Naive thymus-derived CD4-positive, alpha-beta T cell (primary cell): ENCODE measurements at regions of chr10 and their contacts with region 1.

Region 1: GRCh38 chr10:114937962-114938855 is at the start of gene TRUB1:
- DNase-seq: peak; percentile 59 to 91 (median 87)
- ATAC-seq: peak; percentile 100
- H3K4me3 ChIP-seq: peak within 1 kb of the TSS; percentile 87
- H3K4me3 Mint-ChIP-seq: peak within 1 kb of the TSS; percentile 94 to 99 (median 96)
- H3K27ac ChIP-seq: peak within 1 kb of the TSS; percentile 79
- H3K27ac Mint-ChIP-seq: peak within 1 kb of the TSS; percentile 95 to 98 (median 96)
- H3K4me1 ChIP-seq: peaks cover 12 to 23% of the 10 kb centered on the region in 2 donors
- H3K4me1 Mint-ChIP-seq: peaks cover 20 to 43% (median 31%) of the 10 kb centered on the region in 7 donors
- H3K27me3 ChIP-seq: no peaks in the 10 kb centered on the region
- H3K27me3 Mint-ChIP-seq: no peaks in the 10 kb centered on the region
- total RNA-seq, gene TRUB1: 6.8 to 14.6 (median 12.9) TPM

Region 2: DNA sequence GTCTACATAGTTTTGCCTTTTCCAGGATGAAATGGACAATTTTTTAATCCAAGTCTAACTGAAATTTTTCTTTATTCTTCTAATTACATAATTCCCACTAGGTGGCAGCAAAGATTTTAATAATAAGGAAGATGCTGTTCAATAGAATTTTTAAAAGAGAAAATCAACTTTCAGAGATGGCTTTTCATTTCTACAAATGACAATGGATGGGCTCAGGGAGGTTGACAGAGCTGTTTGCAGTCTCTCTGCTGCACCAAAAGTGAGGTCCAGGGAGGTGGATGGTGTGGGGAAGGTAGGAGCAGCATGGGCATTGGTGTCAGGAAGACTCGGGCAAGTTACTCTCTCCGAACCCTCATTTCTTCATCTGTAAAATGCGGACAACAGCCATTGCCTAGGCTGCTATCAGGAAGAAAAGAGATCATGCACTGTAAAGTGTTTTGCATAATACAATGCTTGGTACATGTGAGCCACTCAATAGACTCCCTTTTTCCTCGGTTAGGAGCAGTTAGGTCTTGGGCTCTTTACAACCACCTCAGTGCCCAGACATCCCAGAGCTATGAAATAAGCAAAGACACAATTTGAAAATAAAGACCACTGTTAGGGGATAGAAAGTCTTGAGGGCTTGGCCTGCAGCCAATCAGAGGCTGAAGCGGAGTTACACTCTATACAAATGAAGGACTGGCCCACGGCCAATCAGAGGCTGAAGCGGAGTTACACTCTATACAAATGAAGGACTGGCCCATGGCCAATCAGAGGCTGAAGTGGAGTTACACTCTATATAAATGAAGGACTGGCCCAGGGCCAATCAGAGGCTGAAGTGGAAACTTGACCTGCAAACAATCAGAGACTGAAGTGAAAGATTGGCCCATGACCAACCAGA is 387.2 kb before region 1 on chr10:
- CTCF ChIA-PET with region 1: no interaction called
- POLR2A ChIA-PET with region 1: no interaction called
- intact Hi-C with region 1: no loop called
- DNase-seq: peak in 5 of 9 donors; percentile 33 to 50 (median 40)
- ATAC-seq: peak; percentile 26
- H3K4me3 ChIP-seq: no peak overlapping the region
- H3K4me3 Mint-ChIP-seq: no peak overlapping the region
- H3K27ac ChIP-seq: no peak overlapping the region
- H3K27ac Mint-ChIP-seq: peak overlapping the region in 5 of 9 donors; percentile 1 to 61 (median 20)
- H3K4me1 ChIP-seq: peaks cover 6 to 29% of the 10 kb centered on the region in 2 donors
- H3K4me1 Mint-ChIP-seq: peaks cover 16 to 37% (median 33%) of the 10 kb centered on the region in 7 donors
- H3K27me3 ChIP-seq: no peaks in the 10 kb centered on the region
- H3K27me3 Mint-ChIP-seq: peaks cover 0 to 5% (median 0%) of the 10 kb centered on the region in 5 donors

Region 3: DNA sequence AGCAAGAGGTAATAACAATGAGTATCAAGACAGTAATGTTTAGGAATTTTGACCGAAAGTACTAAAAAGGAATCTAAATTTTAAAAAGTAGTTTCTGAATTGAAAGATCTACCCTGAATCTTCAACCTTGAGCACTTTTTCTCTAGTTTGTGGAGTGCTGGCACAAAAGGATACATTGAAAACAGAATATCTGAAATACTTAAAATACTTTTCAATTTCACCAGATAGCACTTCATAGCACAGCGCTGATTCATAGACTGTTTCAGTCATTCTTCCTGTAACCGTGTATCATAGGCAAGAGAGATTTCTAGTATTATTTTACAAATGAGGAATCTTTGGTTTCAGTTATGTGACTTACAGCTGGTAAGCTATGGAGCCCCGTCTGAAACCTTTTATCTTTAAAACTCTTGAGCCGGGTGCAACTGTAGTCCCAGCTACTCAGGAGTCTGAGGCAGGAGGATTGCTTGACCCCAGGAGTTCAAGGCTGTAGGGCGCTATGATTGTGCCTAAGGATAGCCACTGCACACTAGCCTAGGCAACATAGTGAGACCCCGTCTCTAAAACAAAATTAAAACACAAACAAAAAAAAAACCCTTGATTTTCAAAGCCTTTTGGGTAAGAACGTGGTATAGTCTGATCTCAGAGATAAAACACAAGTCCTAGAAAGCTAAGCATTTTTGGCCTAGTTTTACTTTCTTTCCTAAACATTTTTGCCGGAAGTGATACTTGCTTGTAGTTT is 81.5 kb before region 1 on chr10:
- CTCF ChIA-PET with region 1: no interaction called
- POLR2A ChIA-PET with region 1: no interaction called
- intact Hi-C with region 1: loop called in 1 of 2 experiments (anchors 1 kb)
- DNase-seq: peak in 1 of 9 donors; percentile 3
- ATAC-seq: no peak
- H3K4me3 ChIP-seq: no peak overlapping the region
- H3K4me3 Mint-ChIP-seq: peak overlapping the region in 5 of 10 donors; percentile 9 to 49 (median 34)
- H3K27ac ChIP-seq: peak overlapping the region; percentile 39
- H3K27ac Mint-ChIP-seq: peak overlapping the region; percentile 32 to 81 (median 64)
- H3K4me1 ChIP-seq: no peaks in the 10 kb centered on the region
- H3K4me1 Mint-ChIP-seq: peaks cover 0 to 29% (median 0%) of the 10 kb centered on the region in 7 donors
- H3K27me3 ChIP-seq: no peaks in the 10 kb centered on the region
- H3K27me3 Mint-ChIP-seq: no peaks in the 10 kb centered on the region

Region 4: DNA sequence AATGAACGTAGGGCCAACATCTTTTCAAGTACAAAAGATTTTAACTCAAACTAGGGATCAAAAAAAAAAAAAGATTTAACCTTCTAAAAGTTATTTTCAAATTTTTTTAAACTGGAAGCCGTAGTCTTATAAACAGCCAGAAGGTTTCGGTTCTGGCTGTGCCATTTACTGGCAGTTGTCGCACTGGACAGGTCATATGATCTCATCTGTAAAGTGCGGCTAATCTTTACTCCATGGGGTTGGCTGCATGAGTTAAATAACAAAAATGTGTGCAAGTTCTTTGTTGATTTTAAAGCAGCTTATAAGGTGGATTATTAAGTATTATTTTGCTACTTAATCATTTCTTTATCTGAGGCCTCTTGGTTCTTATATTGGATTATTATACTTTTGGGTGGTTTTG is 36.4 kb after region 1 on chr10:
- CTCF ChIA-PET with region 1: no interaction called
- POLR2A ChIA-PET with region 1: no interaction called
- intact Hi-C with region 1: no loop called
- DNase-seq: no peak
- ATAC-seq: no peak
- H3K4me3 ChIP-seq: no peak overlapping the region
- H3K4me3 Mint-ChIP-seq: no peak overlapping the region
- H3K27ac ChIP-seq: no peak overlapping the region
- H3K27ac Mint-ChIP-seq: peak overlapping the region in 1 of 9 donors; percentile 78
- H3K4me1 ChIP-seq: peaks cover 0 to 10% of the 10 kb centered on the region in 2 donors
- H3K4me1 Mint-ChIP-seq: peaks cover 0 to 15% (median 9%) of the 10 kb centered on the region in 7 donors
- H3K27me3 ChIP-seq: no peaks in the 10 kb centered on the region
- H3K27me3 Mint-ChIP-seq: no peaks in the 10 kb centered on the region

Region 5: GRCh38 chr10:115082506-115082905 is 144.3 kb after region 1 on chr10:
- CTCF ChIA-PET with region 1: no interaction called
- POLR2A ChIA-PET with region 1: no interaction called
- intact Hi-C with region 1: no loop called
- DNase-seq: no peak
- ATAC-seq: no peak
- H3K4me3 ChIP-seq: no peak overlapping the region
- H3K4me3 Mint-ChIP-seq: no peak overlapping the region
- H3K27ac ChIP-seq: no peak overlapping the region
- H3K27ac Mint-ChIP-seq: no peak overlapping the region
- H3K4me1 ChIP-seq: no peaks in the 10 kb centered on the region
- H3K4me1 Mint-ChIP-seq: no peaks in the 10 kb centered on the region
- H3K27me3 ChIP-seq: no peaks in the 10 kb centered on the region
- H3K27me3 Mint-ChIP-seq: peaks cover 27 to 39% (median 38%) of the 10 kb centered on the region in 5 donors

Region 6: GRCh38 chr10:115355162-115355760 is 417.1 kb after region 1 on chr10:
- CTCF ChIA-PET with region 1: no interaction called
- POLR2A ChIA-PET with region 1: no interaction called
- intact Hi-C with region 1: no loop called
- DNase-seq: peak in 1 of 9 donors; percentile 2
- ATAC-seq: no peak
- H3K4me3 ChIP-seq: no peak overlapping the region
- H3K4me3 Mint-ChIP-seq: no peak overlapping the region
- H3K27ac ChIP-seq: no peak overlapping the region
- H3K27ac Mint-ChIP-seq: no peak overlapping the region
- H3K4me1 ChIP-seq: no peaks in the 10 kb centered on the region
- H3K4me1 Mint-ChIP-seq: no peaks in the 10 kb centered on the region
- H3K27me3 ChIP-seq: no peaks in the 10 kb centered on the region
- H3K27me3 Mint-ChIP-seq: no peaks in the 10 kb centered on the region